ENCODE measurements at regions of chr19 and their contacts with region 1.

Region 1: GRCh38 chr19:58439576-58440554 is at the start of gene ZNF132:
- DNase-seq: peak; percentile 97
- H3K4me3 Mint-ChIP-seq: peak within 1 kb of the TSS; percentile 84
- H3K27ac Mint-ChIP-seq: peak within 1 kb of the TSS; percentile 71
- H3K4me1 Mint-ChIP-seq: peaks cover 25% of the 10 kb centered on the region
- H3K27me3 Mint-ChIP-seq: no peaks in the 10 kb centered on the region
- total RNA-seq, gene ZNF132: 3.1 to 3.6 TPM

Region 2: DNA sequence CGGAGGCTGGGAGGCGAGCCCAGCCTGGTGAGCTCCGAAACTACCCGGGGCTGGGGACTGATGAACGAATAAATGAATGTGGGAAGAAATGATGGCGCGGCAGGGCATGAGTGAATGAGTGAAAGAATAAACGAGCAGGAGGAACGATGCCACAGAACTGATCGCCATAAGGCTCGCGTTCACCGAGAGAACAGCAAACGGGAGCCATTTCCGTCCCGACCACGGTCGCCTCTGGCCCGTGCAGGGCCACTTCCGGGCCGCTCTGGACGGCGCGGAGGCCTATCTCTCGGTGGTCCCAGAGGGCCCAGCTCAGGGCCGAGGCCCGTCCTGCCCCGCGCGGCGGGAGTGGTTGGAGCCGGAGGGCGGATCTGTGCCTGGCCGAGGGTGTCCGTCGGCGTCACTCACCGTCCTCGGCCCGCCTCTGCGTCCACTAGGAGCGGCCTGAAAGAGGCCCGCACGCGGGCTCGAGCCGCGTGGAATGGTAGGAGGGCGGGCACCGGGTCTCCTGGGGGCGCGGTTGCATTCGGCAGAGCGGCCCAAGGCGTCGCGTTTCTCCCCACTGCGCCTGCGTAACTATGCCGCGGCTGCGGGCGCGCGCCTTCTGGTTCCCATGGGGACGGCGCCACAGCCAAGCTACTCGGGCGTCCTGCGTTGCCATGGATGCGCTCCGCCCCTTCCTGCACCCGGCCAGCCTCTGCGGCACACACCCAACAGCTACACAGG is 77.4 kb before region 1 on chr19 and contains the start of gene ZNF497:
- CTCF ChIA-PET with region 1: no interaction called
- POLR2A ChIA-PET with region 1: no interaction called
- intact Hi-C with region 1: loop called (anchors 1 kb)
- DNase-seq: peak; percentile 98
- H3K4me3 Mint-ChIP-seq: peak within 1 kb of the TSS; percentile 94
- H3K27ac Mint-ChIP-seq: peak within 1 kb of the TSS; percentile 89
- H3K4me1 Mint-ChIP-seq: peaks cover 8% of the 10 kb centered on the region
- H3K27me3 Mint-ChIP-seq: no peaks in the 10 kb centered on the region
- total RNA-seq, gene ZNF497: 0.31 to 0.93 TPM

Region 3: DNA sequence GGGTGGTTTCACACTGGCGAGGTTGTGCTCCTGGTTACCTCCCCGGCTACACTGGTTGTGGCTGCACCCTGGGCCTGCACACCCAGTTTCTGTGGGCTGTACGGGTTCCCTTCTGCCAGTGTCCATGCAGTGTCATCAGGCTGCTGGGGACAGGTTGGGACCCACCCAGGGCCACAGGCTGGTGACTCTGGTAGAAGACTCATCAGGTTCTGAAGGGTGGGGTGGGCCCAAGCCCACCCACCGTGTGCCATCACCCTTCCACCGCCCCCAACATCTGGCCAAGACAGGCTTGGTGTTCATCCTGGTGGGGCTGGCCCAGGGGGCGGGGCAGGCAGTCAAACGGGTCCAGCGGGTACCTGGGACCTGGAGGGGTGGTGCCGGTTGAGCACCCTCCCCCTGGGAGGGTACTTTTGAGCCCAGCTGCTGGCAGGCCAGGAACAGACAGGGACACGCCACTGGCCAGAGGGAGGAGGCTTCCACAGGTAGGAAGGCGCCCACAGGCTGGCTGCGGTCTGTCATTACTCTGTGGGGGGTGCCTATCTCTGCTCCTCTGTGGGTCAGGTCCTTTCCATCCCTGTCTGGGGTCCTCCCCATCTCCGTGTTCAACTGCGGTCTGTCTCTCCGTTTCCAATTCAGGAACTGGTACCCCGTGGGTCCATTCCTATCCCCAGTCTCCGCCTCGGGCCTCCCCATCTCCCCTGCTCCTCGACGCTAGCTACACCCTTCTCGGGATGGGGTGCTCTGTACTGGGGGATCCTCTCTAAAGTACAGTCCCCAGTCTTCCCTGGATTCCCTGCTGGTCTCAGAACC is 44.4 kb before region 1 on chr19 and contains the start of gene RNF225:
- CTCF ChIA-PET with region 1: no interaction called
- POLR2A ChIA-PET with region 1: no interaction called
- intact Hi-C with region 1: no loop called
- DNase-seq: no peak
- H3K4me3 Mint-ChIP-seq: no peak within 1 kb of the TSS
- H3K27ac Mint-ChIP-seq: no peak within 1 kb of the TSS
- H3K4me1 Mint-ChIP-seq: peaks cover 20% of the 10 kb centered on the region
- H3K27me3 Mint-ChIP-seq: peaks cover 3% of the 10 kb centered on the region
- total RNA-seq, gene RNF225: 0.21 to 0.31 TPM

Region 4: GRCh38 chr19:58451358-58452101 is 11.7 kb after region 1 on chr19 and contains the start of gene ZNF324B:
- CTCF ChIA-PET with region 1: no interaction called
- POLR2A ChIA-PET with region 1: interaction called, 4 read pairs
- intact Hi-C with region 1: loop called (anchors 1 kb)
- DNase-seq: peak; percentile 97
- H3K4me3 Mint-ChIP-seq: peak within 1 kb of the TSS; percentile 78
- H3K27ac Mint-ChIP-seq: no peak within 1 kb of the TSS
- H3K4me1 Mint-ChIP-seq: peaks cover 21% of the 10 kb centered on the region
- H3K27me3 Mint-ChIP-seq: peaks cover 13% of the 10 kb centered on the region
- total RNA-seq, gene ZNF324B: 7.7 to 7.8 TPM

Region 5: GRCh38 chr19:58466760-58467589 is 27.1 kb after region 1 on chr19 and contains the start of gene ZNF324:
- CTCF ChIA-PET with region 1: no interaction called
- POLR2A ChIA-PET with region 1: no interaction called
- intact Hi-C with region 1: loop called (anchors 1 kb)
- DNase-seq: peak; percentile 99
- H3K4me3 Mint-ChIP-seq: peak within 1 kb of the TSS; percentile 83
- H3K27ac Mint-ChIP-seq: peak within 1 kb of the TSS; percentile 62
- H3K4me1 Mint-ChIP-seq: peaks cover 17% of the 10 kb centered on the region
- H3K27me3 Mint-ChIP-seq: no peaks in the 10 kb centered on the region
- total RNA-seq, gene ZNF324: 7.0 to 8.3 TPM

Region 6: GRCh38 chr19:58499021-58499927 is 59.4 kb after region 1 on chr19:
- CTCF ChIA-PET with region 1: no interaction called
- POLR2A ChIA-PET with region 1: no interaction called
- intact Hi-C with region 1: loop called (anchors 2 kb)
- DNase-seq: peak; percentile 100
- H3K4me3 Mint-ChIP-seq: peak overlapping the region; percentile 89
- H3K27ac Mint-ChIP-seq: peak overlapping the region; percentile 80
- H3K4me1 Mint-ChIP-seq: peaks cover 27% of the 10 kb centered on the region
- H3K27me3 Mint-ChIP-seq: no peaks in the 10 kb centered on the region

Region 7: GRCh38 chr19:58572818-58573657 is 133.2 kb after region 1 on chr19 and contains the start of gene MZF1:
- CTCF ChIA-PET with region 1: no interaction called
- POLR2A ChIA-PET with region 1: no interaction called
- intact Hi-C with region 1: loop called (anchors 1 kb)
- DNase-seq: peak; percentile 100
- H3K4me3 Mint-ChIP-seq: peak within 1 kb of the TSS; percentile 96
- H3K27ac Mint-ChIP-seq: peak within 1 kb of the TSS; percentile 100
- H3K4me1 Mint-ChIP-seq: peaks cover 33% of the 10 kb centered on the region
- H3K27me3 Mint-ChIP-seq: no peaks in the 10 kb centered on the region
- total RNA-seq, gene MZF1: 13.3 to 14.4 TPM